Dorsolateral prefrontal cortex (tissue), 120 donors: ENCODE measurements at regions of chr9 and their contacts with region 1.

Region 1: GRCh38 chr9:112074250-112075008 is 100.7 kb downstream of the SUSD1 start:
- DNase-seq: peak in 7 of 10 donors; percentile 39 to 73 (median 52)
- H3K4me3 ChIP-seq: peak overlapping the region in 3 of 59 donors; percentile 16 to 20 (median 18)
- H3K27ac ChIP-seq: peak overlapping the region in 10 of 59 donors; percentile 10 to 65 (median 32)
- H3K27me3 ChIP-seq: no peaks in the 10 kb centered on the region
- CTCF ChIP-seq: peak; percentile 63 to 97 (median 88)

Region 2: GRCh38 chr9:111759762-111760639 is 314.4 kb before region 1 on chr9:
- intact Hi-C with region 1: loop called (anchors 5 kb)
- DNase-seq: peak in 2 of 10 donors; percentile 4 to 41
- H3K4me3 ChIP-seq: no peak overlapping the region
- H3K27ac ChIP-seq: no peak overlapping the region
- H3K27me3 ChIP-seq: no peaks in the 10 kb centered on the region
- CTCF ChIP-seq: peak; percentile 59 to 92 (median 75)

Region 3: GRCh38 chr9:111896353-111896958 is 178.0 kb before region 1 on chr9 and contains the start of gene UGCG:
- intact Hi-C with region 1: loop called in 1 of 2 experiments (anchors 5 kb)
- DNase-seq: peak; percentile 62 to 94 (median 86)
- H3K4me3 ChIP-seq: peak within 1 kb of the TSS; percentile 68 to 98 (median 89)
- H3K27ac ChIP-seq: peak within 1 kb of the TSS in 58 of 59 donors; percentile 67 to 96 (median 90)
- H3K27me3 ChIP-seq: no peaks in the 10 kb centered on the region
- CTCF ChIP-seq: peak in 10 of 56 donors; percentile 4 to 55 (median 12)
- total RNA-seq, gene UGCG: 12.6 to 46.0 (median 30.8) TPM